ENCODE measurements at regions of chr15 and their contacts with region 1.

Region 1: GRCh38 chr15:63752075-63752684 is 81.6 kb downstream of the HERC1 start:
- DNase-seq: no peak
- H3K4me3 ChIP-seq: no peak overlapping the region
- H3K27ac ChIP-seq: no peak overlapping the region
- H3K4me1 ChIP-seq: no peaks in the 10 kb centered on the region
- H3K27me3 ChIP-seq: no peaks in the 10 kb centered on the region
- CTCF ChIP-seq: peak; percentile 64 to 89

Region 2: DNA sequence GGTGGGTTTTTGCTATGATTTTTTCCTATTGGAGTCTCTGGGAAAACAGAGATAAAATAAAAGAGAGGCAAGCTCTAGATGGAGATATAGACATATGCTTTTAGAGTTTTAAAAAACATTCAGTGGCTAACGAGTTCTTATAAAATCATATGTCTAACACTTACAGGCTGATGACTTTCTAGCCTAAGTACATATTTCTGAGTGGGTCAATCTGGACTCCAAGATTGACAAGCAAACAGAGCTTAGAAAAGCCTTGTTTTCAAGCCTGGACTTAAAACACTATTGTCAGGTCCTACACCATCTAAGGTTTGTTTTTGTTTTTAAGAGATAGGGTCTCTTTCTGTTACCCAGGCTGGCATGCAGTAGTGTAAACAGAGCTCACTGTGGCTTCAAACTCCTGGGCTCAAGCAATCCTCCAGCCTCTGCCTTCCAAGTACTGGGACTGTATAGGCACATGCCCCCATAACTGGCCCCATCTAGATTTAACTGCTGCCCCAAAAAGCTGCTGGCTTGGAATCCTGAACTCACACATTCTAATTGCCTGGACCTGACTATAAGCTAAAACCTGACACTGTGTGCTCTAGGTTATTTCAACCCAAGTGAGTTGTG is 68.7 kb before region 1 on chr15:
- intact Hi-C with region 1: no loop called
- DNase-seq: no peak
- H3K4me3 ChIP-seq: no peak overlapping the region
- H3K27ac ChIP-seq: no peak overlapping the region
- H3K4me1 ChIP-seq: no peaks in the 10 kb centered on the region
- H3K27me3 ChIP-seq: no peaks in the 10 kb centered on the region
- CTCF ChIP-seq: no peak

Region 3: DNA sequence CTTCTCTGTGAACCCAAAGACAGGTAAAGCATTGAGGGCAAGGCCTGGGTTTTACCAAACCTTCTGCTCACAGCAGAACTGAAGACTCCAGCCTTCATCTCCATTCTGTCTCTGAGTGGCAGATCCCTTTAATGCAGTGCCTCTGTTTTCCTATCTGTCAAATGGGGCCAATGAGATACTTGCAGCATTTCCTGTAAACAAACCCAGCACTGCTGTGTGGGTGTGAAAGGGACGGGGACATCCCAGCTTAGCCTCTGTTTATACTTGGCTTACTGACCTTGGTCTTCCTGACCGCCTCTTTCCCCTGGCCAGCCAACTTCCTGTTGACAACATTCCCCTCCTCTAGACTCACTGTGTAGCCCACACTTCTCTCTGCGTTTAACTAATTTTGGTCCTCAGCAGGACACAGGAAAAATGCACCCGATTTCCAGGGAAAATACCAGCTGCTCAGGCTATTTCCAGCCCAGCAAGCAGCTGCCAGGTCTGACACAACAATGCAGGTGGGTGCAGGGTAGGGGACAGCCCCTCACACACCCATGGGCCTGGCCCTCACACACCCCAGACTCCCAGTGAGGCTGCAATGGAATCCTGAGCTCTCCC is 187.5 kb after region 1 on chr15:
- intact Hi-C with region 1: no loop called
- DNase-seq: peak in 1 of 2 donors; percentile 57
- H3K4me3 ChIP-seq: no peak overlapping the region
- H3K27ac ChIP-seq: peak overlapping the region; percentile 54 to 63
- H3K4me1 ChIP-seq: peaks cover 0 to 31% (median 14%) of the 10 kb centered on the region in 4 donors
- H3K27me3 ChIP-seq: no peaks in the 10 kb centered on the region
- CTCF ChIP-seq: no peak

Region 4: DNA sequence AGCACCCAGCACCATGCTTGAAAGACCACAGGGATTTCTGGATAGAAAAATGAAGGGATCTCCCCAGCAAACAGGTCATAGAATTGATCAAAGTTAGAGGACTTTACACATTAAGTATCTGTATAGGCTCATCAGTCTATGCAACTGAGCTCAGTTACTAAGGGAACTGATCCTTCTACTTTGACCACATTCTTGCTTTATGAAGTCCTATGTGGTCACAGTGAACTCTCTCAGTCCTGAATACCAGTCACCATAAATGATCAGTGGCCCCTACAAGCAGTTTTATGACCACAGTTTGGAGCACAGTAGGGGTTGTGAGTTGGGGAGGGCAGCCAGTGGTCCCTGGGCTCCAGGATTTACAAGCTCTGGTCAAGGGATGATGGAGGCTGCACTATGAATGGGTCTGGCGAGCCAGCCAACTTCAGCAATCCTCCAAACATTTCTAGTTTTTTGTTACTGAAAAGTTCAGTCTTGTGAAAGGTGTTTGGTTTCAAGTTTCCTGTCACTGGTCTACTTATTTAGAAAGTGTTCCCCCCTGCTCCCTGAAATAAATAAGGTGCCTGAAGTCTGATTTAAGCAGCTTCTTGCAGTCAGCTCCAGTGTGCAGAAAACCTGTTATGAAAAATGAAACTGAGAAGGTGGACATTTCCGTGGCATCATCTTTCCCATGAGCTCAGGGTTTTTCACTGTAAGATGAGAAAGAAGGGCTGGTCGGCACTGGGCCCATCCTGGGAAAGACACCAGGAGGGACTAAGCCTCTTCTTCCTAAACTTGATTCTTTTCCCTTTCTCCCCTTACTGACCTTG is 218.6 kb after region 1 on chr15:
- intact Hi-C with region 1: no loop called
- DNase-seq: no peak
- H3K4me3 ChIP-seq: no peak overlapping the region
- H3K27ac ChIP-seq: no peak overlapping the region
- H3K4me1 ChIP-seq: peaks cover 0 to 18% (median 14%) of the 10 kb centered on the region in 4 donors
- H3K27me3 ChIP-seq: no peaks in the 10 kb centered on the region
- CTCF ChIP-seq: no peak

Region 5: DNA sequence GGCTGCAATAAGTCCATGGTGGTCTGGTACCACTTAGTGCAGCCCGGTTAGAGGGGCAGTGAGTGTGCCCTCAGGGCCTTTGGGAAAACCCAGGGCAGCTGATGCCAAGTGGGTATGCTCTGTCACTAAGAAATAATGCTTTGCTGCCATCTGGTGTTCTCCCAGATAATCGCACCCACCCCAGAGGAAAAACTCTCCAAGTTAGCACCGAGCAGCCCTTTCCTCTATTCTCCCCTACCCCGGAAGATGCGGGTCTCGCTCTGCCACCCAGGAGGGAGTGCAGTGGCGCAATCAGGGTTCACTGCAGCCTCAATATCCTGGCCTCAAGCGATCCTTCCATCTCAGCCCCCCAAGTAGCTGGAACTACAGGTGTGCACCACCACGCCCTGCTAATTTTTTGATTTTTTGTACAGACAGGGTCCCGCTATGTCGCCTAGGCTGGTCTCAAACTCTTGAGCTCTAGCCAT is 315.4 kb after region 1 on chr15:
- intact Hi-C with region 1: loop called (anchors 5 kb)
- DNase-seq: peak; percentile 59 to 73
- H3K4me3 ChIP-seq: no peak overlapping the region
- H3K27ac ChIP-seq: no peak overlapping the region
- H3K4me1 ChIP-seq: peaks cover 0 to 26% (median 22%) of the 10 kb centered on the region in 4 donors
- H3K27me3 ChIP-seq: no peaks in the 10 kb centered on the region
- CTCF ChIP-seq: peak; percentile 79 to 85